Psoas muscle (tissue), 8 donors: ENCODE measurements at regions of chr7 and their contacts with region 1.

Region 1: DNA sequence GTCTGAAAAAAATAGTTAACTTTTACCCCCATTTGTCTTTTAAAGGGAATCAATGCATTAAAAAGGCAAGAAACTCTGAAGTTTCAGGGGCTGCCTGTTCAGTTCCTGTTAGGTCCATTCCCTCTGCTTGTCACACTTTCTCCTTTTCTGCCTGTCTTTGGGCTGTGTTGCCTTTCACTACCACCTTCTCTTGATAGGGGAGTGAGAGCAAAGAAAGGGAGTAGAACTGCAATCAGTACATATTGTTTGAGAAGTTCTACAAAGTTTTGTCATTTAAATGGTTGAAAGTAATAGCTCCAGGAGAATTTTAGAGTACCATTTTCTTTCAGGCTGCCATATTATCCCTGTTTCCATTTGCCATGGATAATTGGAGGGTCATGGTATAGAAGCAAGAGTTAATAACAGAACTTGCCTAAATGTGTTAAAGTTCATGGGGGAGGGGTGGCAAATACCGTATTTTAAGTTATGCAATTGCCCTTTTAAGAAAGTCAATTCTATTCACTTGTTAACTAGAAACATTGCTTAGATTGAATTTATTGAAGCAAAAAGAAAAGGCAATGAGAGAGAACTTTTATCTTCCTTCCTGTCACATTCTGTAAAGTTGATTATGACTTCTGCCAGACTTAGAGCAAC is 38.6 kb downstream of the MPLKIP start:
- DNase-seq: no peak
- ATAC-seq: no peak
- H3K4me3 ChIP-seq: no peak overlapping the region
- H3K27ac ChIP-seq: no peak overlapping the region
- H3K4me1 ChIP-seq: peaks cover 28% of the 10 kb centered on the region
- H3K27me3 ChIP-seq: no peaks in the 10 kb centered on the region
- CTCF ChIP-seq: no peak

Region 2: GRCh38 chr7:39948956-39949928 is 146.6 kb before region 1 on chr7:
- intact Hi-C with region 1: no loop called
- DNase-seq: peak; percentile 99 to 100
- ATAC-seq: peak; percentile 87 to 93 (median 90)
- H3K4me3 ChIP-seq: peak overlapping the region; percentile 95
- H3K27ac ChIP-seq: peak overlapping the region; percentile 96
- H3K4me1 ChIP-seq: peaks cover 21% of the 10 kb centered on the region
- H3K27me3 ChIP-seq: no peaks in the 10 kb centered on the region
- CTCF ChIP-seq: no peak

Region 3: GRCh38 chr7:40134428-40135316 is 38.9 kb after region 1 on chr7 and contains the starts of genes MPLKIP and SUGCT:
- intact Hi-C with region 1: loop called in 1 of 2 experiments (anchors 5 kb)
- DNase-seq: peak; percentile 82 to 91
- ATAC-seq: peak; percentile 95 to 97 (median 96)
- H3K4me3 ChIP-seq: peak within 1 kb of the TSS; percentile 99
- H3K27ac ChIP-seq: peak within 1 kb of the TSS; percentile 97
- H3K4me1 ChIP-seq: peaks cover 32% of the 10 kb centered on the region
- H3K27me3 ChIP-seq: no peaks in the 10 kb centered on the region
- CTCF ChIP-seq: peak; percentile 96
- total RNA-seq, gene MPLKIP: 17.3 to 19.0 (median 18.9) TPM
- total RNA-seq, gene SUGCT: 3.2 to 7.3 (median 5.0) TPM

Region 4: GRCh38 chr7:40341836-40342235 is 246.0 kb after region 1 on chr7:
- intact Hi-C with region 1: no loop called
- DNase-seq: no peak
- ATAC-seq: no peak
- H3K4me3 ChIP-seq: no peak overlapping the region
- H3K27ac ChIP-seq: no peak overlapping the region
- H3K4me1 ChIP-seq: no peaks in the 10 kb centered on the region
- H3K27me3 ChIP-seq: no peaks in the 10 kb centered on the region
- CTCF ChIP-seq: no peak

Region 5: GRCh38 chr7:41207141-41207540 is 1111.3 kb after region 1 on chr7:
- intact Hi-C with region 1: no loop called
- DNase-seq: no peak
- ATAC-seq: no peak
- H3K4me3 ChIP-seq: no peak overlapping the region
- H3K27ac ChIP-seq: no peak overlapping the region
- H3K4me1 ChIP-seq: no peaks in the 10 kb centered on the region
- H3K27me3 ChIP-seq: no peaks in the 10 kb centered on the region
- CTCF ChIP-seq: no peak